Activated T-helper 1 cell treated with anti-CD3 and anti-CD28 coated beads, Interleukin-12 subunit alpha, Interleukin-12 subunit beta, Interleukin-2, Interleukin-4 antibody, amounts not matched to agents 30 ng/mL and 10 ng/mL and 1 ng/mL, durations not matched to agents 14 hours and 24 hours and 36 hours (primary cell): ENCODE measurements at regions of chr20 and their contacts with region 1.

Region 1: GRCh38 chr20:34704177-34705007 is at the start of gene TP53INP2:
- DNase-seq: peak; percentile 86
- H3K4me3 Mint-ChIP-seq: peak within 1 kb of the TSS; percentile 94
- H3K27ac Mint-ChIP-seq: peak within 1 kb of the TSS; percentile 89
- H3K4me1 Mint-ChIP-seq: peaks cover 52% of the 10 kb centered on the region
- H3K27me3 Mint-ChIP-seq: peaks cover 21% of the 10 kb centered on the region
- total RNA-seq, gene TP53INP2: 3.2 and 3.5 TPM in 2 replicates

Region 2: GRCh38 chr20:34312544-34313217 is 391.7 kb before region 1 on chr20:
- intact Hi-C with region 1: loop called (anchors 1 kb)
- DNase-seq: peak; percentile 80
- H3K4me3 Mint-ChIP-seq: no peak overlapping the region
- H3K27ac Mint-ChIP-seq: no peak overlapping the region
- H3K4me1 Mint-ChIP-seq: no peaks in the 10 kb centered on the region
- H3K27me3 Mint-ChIP-seq: peaks cover 27% of the 10 kb centered on the region

Region 3: GRCh38 chr20:34538671-34539123 is 165.7 kb before region 1 on chr20:
- intact Hi-C with region 1: loop called (anchors 1 kb)
- DNase-seq: peak; percentile 29
- H3K4me3 Mint-ChIP-seq: no peak overlapping the region
- H3K27ac Mint-ChIP-seq: no peak overlapping the region
- H3K4me1 Mint-ChIP-seq: peaks cover 24% of the 10 kb centered on the region
- H3K27me3 Mint-ChIP-seq: no peaks in the 10 kb centered on the region

Region 4: DNA sequence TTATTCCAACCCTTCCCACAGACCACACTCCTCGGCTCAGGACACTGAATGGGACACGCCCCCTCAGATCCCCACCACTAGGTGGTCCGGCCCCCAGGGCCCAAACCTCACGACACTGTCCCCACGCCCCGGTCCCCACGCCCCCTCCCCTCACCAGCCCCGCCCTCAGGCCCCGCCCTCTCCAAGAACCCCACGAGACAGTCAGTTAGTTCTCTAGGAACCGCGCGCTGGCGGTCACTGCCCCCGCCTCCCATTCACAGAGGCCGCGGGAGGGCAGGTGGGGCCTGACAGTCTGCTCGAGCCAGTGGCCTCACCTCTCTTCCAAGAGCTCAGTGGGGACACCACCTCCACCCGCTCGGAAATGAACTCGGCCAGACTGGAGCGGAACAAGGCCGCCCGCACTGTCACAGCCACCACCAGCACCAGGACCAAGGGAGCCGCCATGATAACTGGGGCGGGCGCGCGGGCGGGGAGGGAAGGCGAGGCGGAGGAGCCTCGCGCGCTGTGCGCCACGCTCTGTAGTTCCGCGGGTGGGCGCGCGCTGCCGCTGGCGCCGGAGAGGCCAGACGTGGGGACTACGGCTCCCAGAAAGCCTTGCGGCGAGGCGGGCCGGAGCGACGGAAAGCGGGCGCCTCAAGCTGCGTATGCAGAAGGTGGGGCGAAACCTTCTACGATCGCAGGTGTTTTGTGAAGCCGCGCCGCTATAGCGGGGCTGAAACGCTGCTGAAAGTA is 27.6 kb before region 1 on chr20 and contains the start of gene PIGU:
- intact Hi-C with region 1: loop called (anchors 1 kb)
- DNase-seq: peak; percentile 97
- H3K4me3 Mint-ChIP-seq: peak within 1 kb of the TSS; percentile 97
- H3K27ac Mint-ChIP-seq: peak within 1 kb of the TSS; percentile 97
- H3K4me1 Mint-ChIP-seq: peaks cover 27% of the 10 kb centered on the region
- H3K27me3 Mint-ChIP-seq: no peaks in the 10 kb centered on the region
- total RNA-seq, gene PIGU: 24.8 and 25.9 TPM in 2 replicates

Region 5: DNA sequence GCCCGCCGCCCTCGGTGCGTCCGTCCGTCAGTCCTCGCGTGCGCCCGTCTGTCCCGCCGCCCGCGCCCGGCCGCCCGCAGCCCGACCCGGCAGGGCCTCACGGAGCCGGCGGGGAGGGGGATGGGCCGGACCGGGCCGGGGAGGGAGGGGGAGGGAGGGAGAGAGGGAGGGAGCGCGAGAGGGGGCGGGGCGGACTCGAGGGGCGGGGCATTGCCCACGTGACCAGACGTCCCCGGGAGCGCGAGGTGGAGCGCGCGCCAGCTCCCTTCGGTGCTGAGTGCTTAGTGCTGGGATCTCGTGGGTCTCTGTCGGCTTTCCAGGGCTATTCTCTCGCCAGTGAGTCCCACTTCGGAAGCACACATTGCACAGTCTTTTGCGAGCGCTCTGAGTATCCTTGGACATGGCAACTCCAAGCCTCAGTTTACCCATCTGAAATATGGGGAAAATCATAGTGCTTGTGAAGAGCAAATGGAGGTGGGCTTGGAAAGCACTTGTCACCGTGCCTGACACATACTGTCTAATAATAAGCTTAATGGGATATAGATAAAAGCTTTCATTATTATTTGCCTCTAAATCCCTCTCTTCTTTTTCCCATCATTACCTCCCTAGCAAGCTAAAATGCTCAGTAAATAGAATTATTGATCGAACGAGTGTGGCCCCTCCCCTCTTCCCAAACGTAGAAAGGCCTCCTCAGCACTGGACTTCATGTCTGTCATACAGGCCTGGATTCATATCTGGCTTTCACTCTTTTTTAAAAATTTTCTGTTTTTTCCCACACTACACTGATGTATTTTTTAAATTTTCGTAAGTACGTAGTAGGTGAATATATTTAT is 121.4 kb after region 1 on chr20 and contains the start of gene NCOA6:
- intact Hi-C with region 1: loop called (anchors 1 kb)
- DNase-seq: peak; percentile 68
- H3K4me3 Mint-ChIP-seq: peak within 1 kb of the TSS; percentile 97
- H3K27ac Mint-ChIP-seq: peak within 1 kb of the TSS; percentile 91
- H3K4me1 Mint-ChIP-seq: peaks cover 30% of the 10 kb centered on the region
- H3K27me3 Mint-ChIP-seq: peaks cover 13% of the 10 kb centered on the region
- total RNA-seq, gene NCOA6: 25.5 and 29.1 TPM in 2 replicates